IMR-90 (cell line): ENCODE measurements at regions of chr13 and their contacts with region 1.

Region 1: GRCh38 chr13:64154514-64154913 is 2738.9 kb upstream of the PCDH20 start:
- DNase-seq: peak; percentile 40
- ATAC-seq: peak; percentile 62; the same call in 1 of the 2 replicates
- H3K4me3 ChIP-seq: no peak overlapping the region
- H3K27ac ChIP-seq: no peak overlapping the region
- H3K4me1 ChIP-seq: no peaks in the 10 kb centered on the region
- H3K27me3 ChIP-seq: no peaks in the 10 kb centered on the region
- CTCF ChIP-seq: peak; percentile 51
- POLR2A ChIP-seq: no peak
- RAD21 ChIP-seq: peak; percentile 50

Region 2: GRCh38 chr13:62387647-62388046 is 1766.9 kb before region 1 on chr13:
- CTCF ChIA-PET with region 1: no interaction called
- POLR2A ChIA-PET with region 1: no interaction called
- dilution Hi-C with region 1: no loop called
- in situ Hi-C with region 1: no loop called
- intact Hi-C with region 1: loop called (anchors 10 kb)
- DNase-seq: peak; percentile 36
- ATAC-seq: peak; percentile 14; the same call in 1 of the 2 replicates
- H3K4me3 ChIP-seq: no peak overlapping the region
- H3K27ac ChIP-seq: no peak overlapping the region
- H3K4me1 ChIP-seq: no peaks in the 10 kb centered on the region
- H3K27me3 ChIP-seq: no peaks in the 10 kb centered on the region
- CTCF ChIP-seq: peak; percentile 48
- POLR2A ChIP-seq: no peak
- RAD21 ChIP-seq: peak; percentile 47

Region 3: GRCh38 chr13:64453831-64454230 is 299.3 kb after region 1 on chr13:
- CTCF ChIA-PET with region 1: no interaction called
- POLR2A ChIA-PET with region 1: no interaction called
- dilution Hi-C with region 1: no loop called
- in situ Hi-C with region 1: no loop called
- intact Hi-C with region 1: loop called (anchors 10 kb)
- DNase-seq: peak; percentile 1
- ATAC-seq: peak; percentile 46; the same call in 1 of the 2 replicates
- H3K4me3 ChIP-seq: no peak overlapping the region
- H3K27ac ChIP-seq: no peak overlapping the region
- H3K4me1 ChIP-seq: no peaks in the 10 kb centered on the region
- H3K27me3 ChIP-seq: no peaks in the 10 kb centered on the region
- CTCF ChIP-seq: no peak
- POLR2A ChIP-seq: no peak
- RAD21 ChIP-seq: no peak